PC-9 (cell line): ENCODE measurements at regions of chr6 and their contacts with region 1.

Region 1: DNA sequence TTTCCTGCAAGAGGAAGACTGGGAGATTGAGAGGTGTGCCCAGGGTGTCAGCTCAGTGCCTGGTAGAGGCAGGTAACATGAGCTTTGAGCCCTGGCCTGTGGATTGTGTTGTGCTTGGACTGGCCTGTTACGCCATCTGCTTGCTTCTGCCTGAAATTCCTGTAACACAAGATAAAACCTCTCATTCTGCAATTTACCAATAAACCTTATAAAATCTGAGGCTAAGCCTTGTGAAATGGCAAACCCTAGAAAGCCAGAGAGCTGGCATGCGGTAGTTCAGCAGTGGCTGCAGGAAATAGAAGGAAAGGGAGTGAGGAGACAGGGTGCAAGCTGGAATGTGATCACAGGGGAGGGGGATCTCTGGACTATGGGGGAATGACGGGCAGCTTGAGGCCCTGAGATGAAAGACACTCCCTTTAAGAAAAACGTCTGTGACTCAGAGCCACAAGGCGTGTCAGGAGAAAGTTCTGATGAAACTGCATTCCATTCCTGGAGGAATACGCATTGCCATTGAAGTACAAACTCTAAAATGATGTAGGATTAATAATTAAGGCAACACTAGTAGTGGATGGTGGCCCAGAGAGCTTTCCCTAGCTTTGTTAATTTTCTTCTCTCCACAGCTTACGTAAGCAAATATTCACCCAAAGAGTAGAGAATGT is 26.3 kb upstream of the TFAP2A start:
- DNase-seq: peak; percentile 86 to 96
- H3K4me3 ChIP-seq: peak overlapping the region; percentile 25; the same call in 1 of the 2 replicates
- H3K27ac ChIP-seq: peak overlapping the region; percentile 96
- H3K4me1 ChIP-seq: peaks cover 16% of the 10 kb centered on the region
- H3K27me3 ChIP-seq: no peaks in the 10 kb centered on the region
- CTCF ChIP-seq: no peak; the same call in 1 of the 2 replicates

Region 2: GRCh38 chr6:10451828-10452509 is 10.8 kb after region 1 on chr6:
- CTCF ChIA-PET with region 1: no interaction called
- POLR2A ChIA-PET with region 1: interaction called, 3 read pairs
- intact Hi-C with region 1: loop called (anchors 1 kb)
- DNase-seq: peak; percentile 94 to 97
- H3K4me3 ChIP-seq: peak overlapping the region; percentile 4; the same call in 1 of the 2 replicates
- H3K27ac ChIP-seq: peak overlapping the region; percentile 96
- H3K4me1 ChIP-seq: peaks cover 32% of the 10 kb centered on the region
- H3K27me3 ChIP-seq: no peaks in the 10 kb centered on the region
- CTCF ChIP-seq: no peak

Region 3: GRCh38 chr6:10465629-10466504 is 24.7 kb after region 1 on chr6:
- CTCF ChIA-PET with region 1: no interaction called
- POLR2A ChIA-PET with region 1: interaction called, 3 read pairs
- intact Hi-C with region 1: loop called (anchors 1 kb)
- DNase-seq: peak in 1 of 2 experiments; percentile 62
- H3K4me3 ChIP-seq: no peak overlapping the region
- H3K27ac ChIP-seq: no peak overlapping the region
- H3K4me1 ChIP-seq: peaks cover 19% of the 10 kb centered on the region
- H3K27me3 ChIP-seq: no peaks in the 10 kb centered on the region
- CTCF ChIP-seq: peak; percentile 61

Region 4: DNA sequence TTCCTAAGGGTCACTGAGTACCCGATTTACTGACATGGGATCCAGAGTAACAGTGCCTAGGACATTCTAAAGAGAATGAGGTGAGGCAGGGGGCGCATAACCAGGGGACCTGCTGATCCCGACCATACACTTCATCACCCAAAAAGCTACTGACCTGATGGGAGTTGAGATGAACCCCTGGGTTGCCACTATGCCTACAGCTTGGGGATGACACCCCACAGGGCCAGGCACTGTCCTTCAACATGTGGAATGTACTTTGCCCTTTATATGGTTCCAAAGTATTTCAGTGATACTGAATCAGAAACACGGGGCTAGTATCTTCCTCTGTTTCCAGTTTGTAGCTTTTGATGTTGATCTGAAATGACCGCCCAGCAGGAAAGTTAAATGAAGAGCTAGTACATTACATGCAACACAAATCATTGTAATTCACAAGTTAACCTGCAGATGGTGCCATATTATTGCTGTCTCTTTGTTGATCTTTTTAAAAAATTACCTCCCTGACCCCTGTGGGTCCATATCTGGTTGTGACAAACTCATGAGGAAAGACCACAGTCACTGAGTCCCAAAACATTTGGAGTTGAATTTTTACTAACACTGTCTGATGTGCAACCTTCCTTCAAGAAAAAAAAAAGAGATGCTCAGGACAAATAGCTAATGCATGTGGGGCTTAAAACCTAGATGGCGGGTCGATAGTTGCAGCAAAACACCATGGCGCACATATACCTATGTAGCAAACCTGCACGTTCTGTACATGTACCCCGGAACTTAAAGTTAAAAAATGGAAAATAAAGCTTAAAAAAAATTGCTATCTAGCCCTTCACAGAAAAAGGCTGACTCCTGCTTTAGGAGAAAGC is 37.3 kb after region 1 on chr6:
- CTCF ChIA-PET with region 1: interaction called, 5 read pairs
- POLR2A ChIA-PET with region 1: interaction called, 6 read pairs
- intact Hi-C with region 1: loop called (anchors 1 kb)
- DNase-seq: peak; percentile 8 to 37
- H3K4me3 ChIP-seq: no peak overlapping the region
- H3K27ac ChIP-seq: no peak overlapping the region
- H3K4me1 ChIP-seq: peaks cover 11% of the 10 kb centered on the region
- H3K27me3 ChIP-seq: no peaks in the 10 kb centered on the region
- CTCF ChIP-seq: peak; percentile 78

Region 5: GRCh38 chr6:10521104-10521808 is 80.1 kb after region 1 on chr6 and contains the start of gene GCNT2:
- CTCF ChIA-PET with region 1: no interaction called
- POLR2A ChIA-PET with region 1: no interaction called
- intact Hi-C with region 1: loop called (anchors 1 kb)
- DNase-seq: peak; percentile 80 to 92
- H3K4me3 ChIP-seq: peak within 1 kb of the TSS; percentile 46; the same call in 1 of the 2 replicates
- H3K27ac ChIP-seq: peak within 1 kb of the TSS; percentile 99
- H3K4me1 ChIP-seq: peaks cover 42% of the 10 kb centered on the region
- H3K27me3 ChIP-seq: no peaks in the 10 kb centered on the region
- CTCF ChIP-seq: no peak
- total RNA-seq, gene GCNT2: 28.4 and 35.7 TPM in 2 replicates

Region 6: DNA sequence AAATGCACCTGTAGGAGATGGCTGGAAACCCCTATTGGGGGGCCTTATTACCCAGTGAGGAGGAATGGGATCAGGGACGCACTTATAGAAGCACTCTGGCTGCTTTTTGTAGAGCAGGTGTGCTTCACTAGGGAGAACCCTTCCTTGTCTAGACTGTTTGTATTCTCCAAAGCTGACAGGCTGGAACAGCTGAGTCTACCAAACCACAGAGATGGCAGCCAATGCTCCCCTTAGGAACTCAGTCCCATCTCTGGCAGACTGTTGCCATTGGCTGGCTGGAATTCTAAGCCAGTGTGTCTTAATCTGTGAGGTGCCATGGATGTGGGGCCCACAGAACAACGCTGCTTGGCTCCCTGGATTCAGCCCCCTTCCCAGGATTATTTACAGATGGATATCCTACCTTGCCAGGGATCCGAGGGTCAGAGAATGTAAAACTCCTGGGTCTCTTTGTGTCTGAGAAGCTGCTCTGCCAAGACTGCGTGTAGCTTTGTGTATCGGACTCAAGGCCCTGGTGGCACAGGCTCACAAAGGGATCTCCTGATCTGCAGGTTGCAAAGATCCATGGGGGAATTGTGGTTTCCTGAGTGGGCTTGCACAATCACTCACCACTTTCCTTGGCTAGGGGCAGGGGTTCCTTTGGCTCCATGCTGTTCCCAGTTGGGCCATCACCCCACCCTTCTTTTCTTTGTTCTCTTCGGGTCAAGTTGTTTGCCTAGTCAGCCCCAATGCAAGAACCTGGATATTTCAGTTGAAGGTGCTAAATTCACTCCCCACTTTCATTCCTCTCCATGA is 227.2 kb after region 1 on chr6:
- CTCF ChIA-PET with region 1: no interaction called
- POLR2A ChIA-PET with region 1: interaction called, 11 read pairs
- intact Hi-C with region 1: no loop called
- DNase-seq: no peak
- H3K4me3 ChIP-seq: no peak overlapping the region
- H3K27ac ChIP-seq: no peak overlapping the region
- H3K4me1 ChIP-seq: no peaks in the 10 kb centered on the region
- H3K27me3 ChIP-seq: no peaks in the 10 kb centered on the region
- CTCF ChIP-seq: no peak